Endothelial cell of umbilical vein (primary cell): ENCODE measurements at regions of chr4 and their contacts with region 1.

Region 1: DNA sequence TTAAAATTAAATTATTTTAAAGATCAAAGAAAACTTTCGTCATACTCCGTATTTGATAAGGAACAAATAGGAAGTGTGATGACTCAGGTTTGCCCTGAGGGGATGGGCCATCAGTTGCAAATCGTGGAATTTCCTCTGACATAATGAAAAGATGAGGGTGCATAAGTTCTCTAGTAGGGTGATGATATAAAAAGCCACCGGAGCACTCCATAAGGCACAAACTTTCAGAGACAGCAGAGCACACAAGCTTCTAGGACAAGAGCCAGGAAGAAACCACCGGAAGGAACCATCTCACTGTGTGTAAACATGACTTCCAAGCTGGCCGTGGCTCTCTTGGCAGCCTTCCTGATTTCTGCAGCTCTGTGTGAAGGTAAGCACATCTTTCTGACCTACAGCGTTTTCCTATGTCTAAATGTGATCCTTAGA is at the start of gene CXCL8:
- DNase-seq: peak; percentile 94
- H3K4me3 ChIP-seq: peak within 1 kb of the TSS in 2 of 3 experiments; percentile 20 to 62
- H3K27ac ChIP-seq: peak within 1 kb of the TSS; percentile 75
- H3K4me1 ChIP-seq: peaks cover 28% of the 10 kb centered on the region
- H3K27me3 ChIP-seq: no peaks in the 10 kb centered on the region
- CTCF ChIP-seq: no peak
- POLR2A ChIP-seq: peak; percentile 73
- total RNA-seq, gene CXCL8: 5.2 and 12.6 TPM in 2 replicates

Region 2: GRCh38 chr4:73704314-73705055 is 35.9 kb before region 1 on chr4:
- CTCF ChIA-PET with region 1: interaction called, 5 read pairs
- POLR2A ChIA-PET with region 1: no interaction called
- dilution Hi-C with region 1: no loop called
- intact Hi-C with region 1: loop called (anchors 1 kb)
- DNase-seq: peak; percentile 99
- H3K4me3 ChIP-seq: no peak overlapping the region
- H3K27ac ChIP-seq: peak overlapping the region; percentile 70
- H3K4me1 ChIP-seq: peaks cover 61% of the 10 kb centered on the region
- H3K27me3 ChIP-seq: no peaks in the 10 kb centered on the region
- CTCF ChIP-seq: no peak
- POLR2A ChIP-seq: no peak

Region 3: DNA sequence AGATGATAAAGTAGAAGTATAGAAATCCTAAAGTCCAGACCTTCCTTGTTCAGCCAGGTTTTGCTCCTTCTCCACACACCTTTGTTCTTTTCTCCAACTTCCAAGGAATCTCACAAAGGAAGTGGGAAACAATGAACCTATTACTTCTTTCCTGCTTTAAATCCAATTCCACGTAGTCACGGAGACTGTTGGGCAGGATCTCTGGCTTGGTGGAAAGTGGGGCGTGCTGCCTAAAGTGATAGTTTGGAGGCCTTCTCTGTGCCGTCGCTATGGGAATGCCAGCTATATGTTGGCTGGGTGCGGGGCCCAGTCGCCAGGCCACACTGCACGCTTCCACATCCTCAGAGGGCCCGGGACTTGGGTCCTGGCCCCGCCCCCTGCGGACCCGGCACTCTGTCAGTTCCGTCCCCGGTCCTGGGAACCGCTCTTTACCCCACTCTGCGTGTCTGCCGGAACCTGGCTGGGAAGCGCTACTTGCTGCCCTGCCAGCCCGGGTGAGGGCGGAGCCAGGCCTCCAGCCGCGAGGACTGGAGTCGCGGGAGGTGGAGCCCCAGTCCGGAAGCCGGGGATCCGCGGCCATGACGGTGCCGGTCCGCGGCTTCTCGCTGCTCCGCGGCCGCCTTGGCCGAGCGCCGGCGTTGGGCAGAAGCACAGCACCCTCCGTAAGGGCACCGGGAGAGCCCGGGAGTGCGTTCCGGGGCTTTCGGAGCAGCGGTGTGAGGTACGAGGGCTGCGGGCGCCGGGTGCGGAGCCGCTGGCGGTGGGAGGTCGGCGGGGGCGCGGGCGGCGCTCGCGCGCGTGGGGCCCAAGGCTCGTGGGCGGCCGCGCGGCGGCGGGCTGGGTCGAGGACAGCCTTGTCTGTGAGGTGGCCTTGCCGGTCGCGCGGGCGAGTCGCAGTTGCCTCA is 417.4 kb after region 1 on chr4 and contains the start of gene MTHFD2L:
- CTCF ChIA-PET with region 1: no interaction called
- POLR2A ChIA-PET with region 1: no interaction called
- dilution Hi-C with region 1: no loop called
- intact Hi-C with region 1: loop called (anchors 2 kb)
- DNase-seq: peak; percentile 96
- H3K4me3 ChIP-seq: peak within 1 kb of the TSS; percentile 73 to 97 (median 76)
- H3K27ac ChIP-seq: peak within 1 kb of the TSS; percentile 90
- H3K4me1 ChIP-seq: peaks cover 29% of the 10 kb centered on the region
- H3K27me3 ChIP-seq: no peaks in the 10 kb centered on the region
- CTCF ChIP-seq: no peak
- POLR2A ChIP-seq: peak; percentile 88
- total RNA-seq, gene MTHFD2L: 12.4 and 15.2 TPM in 2 replicates